CD4-positive, alpha-beta memory T cell (primary cell): ENCODE measurements at regions of chr21 and their contacts with region 1.

Region 1: DNA sequence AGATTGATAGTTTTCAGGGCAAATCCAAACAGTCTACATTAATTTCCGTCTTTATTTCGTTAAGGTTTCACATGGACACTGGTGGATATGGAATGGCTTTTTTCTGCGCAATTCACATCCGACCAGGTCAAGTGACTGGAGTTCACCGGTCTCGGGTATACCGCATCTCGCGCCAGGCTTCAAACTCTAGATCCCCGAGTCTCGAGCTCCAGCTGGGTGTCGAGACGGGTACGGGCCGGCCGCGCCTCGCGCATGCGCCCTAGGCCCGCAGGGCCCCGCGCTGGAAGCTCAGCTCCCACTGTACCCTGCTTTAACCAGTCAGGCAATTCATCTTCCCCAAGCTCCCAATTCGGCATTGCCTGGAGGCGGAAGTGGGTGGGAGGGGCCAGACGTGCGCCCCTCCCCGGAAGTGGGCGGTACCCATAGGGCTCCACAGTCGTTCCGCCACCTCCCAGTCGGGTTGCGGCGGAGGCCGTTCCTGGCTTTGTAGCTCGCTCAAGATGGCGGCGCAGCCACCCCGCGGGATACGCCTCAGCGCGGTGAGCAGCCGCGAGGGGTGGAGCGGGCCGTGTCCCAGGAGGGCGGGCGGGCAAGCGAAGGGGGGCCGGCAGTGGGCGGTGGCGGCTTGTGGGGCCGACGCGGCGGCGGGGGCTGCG is at the start of gene MORC3:
- DNase-seq: peak; percentile 96 to 98 (median 97)
- H3K4me3 ChIP-seq: peak within 1 kb of the TSS; percentile 75 to 98
- H3K4me3 Mint-ChIP-seq: peak within 1 kb of the TSS; percentile 94 to 98 (median 96)
- H3K27ac ChIP-seq: peak within 1 kb of the TSS; percentile 90
- H3K27ac Mint-ChIP-seq: peak within 1 kb of the TSS; percentile 89 to 99 (median 97)
- H3K4me1 ChIP-seq: peaks cover 28% of the 10 kb centered on the region
- H3K4me1 Mint-ChIP-seq: peaks cover 18 to 46% (median 34%) of the 10 kb centered on the region in 4 donors
- H3K27me3 ChIP-seq: no peaks in the 10 kb centered on the region
- H3K27me3 Mint-ChIP-seq: no peaks in the 10 kb centered on the region
- total RNA-seq, gene MORC3: 105 to 108 TPM

Region 2: DNA sequence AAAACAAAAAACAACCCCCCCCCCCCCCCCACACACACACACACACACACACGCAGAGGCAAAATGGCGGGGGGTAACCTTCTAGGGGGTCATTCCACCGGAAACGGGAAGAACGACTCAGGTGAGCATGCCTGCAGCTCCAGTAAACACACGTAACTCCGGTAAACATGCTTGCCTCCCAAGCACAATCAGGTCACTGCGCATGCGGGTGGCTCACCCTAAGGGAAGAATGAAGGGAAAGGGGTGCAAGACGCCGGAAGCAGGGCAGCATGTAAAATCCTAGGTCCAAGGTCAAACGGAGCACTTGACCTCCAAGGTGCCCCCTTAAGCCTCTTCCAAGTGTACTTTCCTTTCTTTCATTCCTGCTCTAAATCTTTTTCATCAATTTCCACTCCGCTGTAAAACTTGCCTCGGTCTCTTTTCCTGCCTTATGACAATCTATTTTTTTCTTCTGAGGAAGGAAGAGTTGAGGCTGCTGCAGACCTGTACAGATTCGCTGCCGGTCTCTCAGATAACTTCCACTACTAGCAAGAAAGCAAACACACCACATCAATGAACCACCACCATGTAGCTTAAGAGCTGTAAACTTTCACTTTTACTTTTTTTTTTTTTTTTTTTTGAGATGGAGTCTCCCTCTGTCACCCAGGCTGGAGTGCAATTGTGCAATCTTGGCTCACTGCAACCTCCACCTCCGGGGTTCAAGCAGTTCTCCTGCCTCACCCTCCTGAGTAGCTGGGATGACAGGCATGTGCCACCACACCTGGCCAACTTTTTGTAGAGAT is 206.1 kb before region 1 on chr21:
- CTCF ChIA-PET with region 1: no interaction called
- POLR2A ChIA-PET with region 1: interaction called, 18 read pairs
- intact Hi-C with region 1: no loop called
- DNase-seq: peak in 4 of 5 donors; percentile 56 to 85 (median 68)
- H3K4me3 ChIP-seq: peak overlapping the region; percentile 63 to 80
- H3K4me3 Mint-ChIP-seq: peak overlapping the region; percentile 81 to 98 (median 92)
- H3K27ac ChIP-seq: peak overlapping the region; percentile 49
- H3K27ac Mint-ChIP-seq: peak overlapping the region; percentile 45 to 97 (median 90)
- H3K4me1 ChIP-seq: peaks cover 29% of the 10 kb centered on the region
- H3K4me1 Mint-ChIP-seq: peaks cover 17 to 33% (median 21%) of the 10 kb centered on the region in 4 donors
- H3K27me3 ChIP-seq: no peaks in the 10 kb centered on the region
- H3K27me3 Mint-ChIP-seq: peaks cover 2% of the 10 kb centered on the region in 2 donors

Region 3: GRCh38 chr21:36141513-36141925 is 178.4 kb before region 1 on chr21:
- CTCF ChIA-PET with region 1: interaction called, 6 read pairs
- POLR2A ChIA-PET with region 1: interaction called, 14 read pairs
- intact Hi-C with region 1: no loop called
- DNase-seq: peak; percentile 87 to 96 (median 89)
- H3K4me3 ChIP-seq: no peak overlapping the region
- H3K4me3 Mint-ChIP-seq: peak overlapping the region in 5 of 8 donors; percentile 7 to 53 (median 12)
- H3K27ac ChIP-seq: peak overlapping the region; percentile 54
- H3K27ac Mint-ChIP-seq: peak overlapping the region; percentile 69 to 95 (median 89)
- H3K4me1 ChIP-seq: peaks cover 40% of the 10 kb centered on the region
- H3K4me1 Mint-ChIP-seq: peaks cover 25 to 50% (median 29%) of the 10 kb centered on the region in 4 donors
- H3K27me3 ChIP-seq: no peaks in the 10 kb centered on the region
- H3K27me3 Mint-ChIP-seq: no peaks in the 10 kb centered on the region

Region 4: GRCh38 chr21:36169436-36170128 is 150.3 kb before region 1 on chr21:
- CTCF ChIA-PET with region 1: interaction called, 8 read pairs
- POLR2A ChIA-PET with region 1: interaction called, 28 read pairs
- intact Hi-C with region 1: no loop called
- DNase-seq: no peak
- H3K4me3 ChIP-seq: no peak overlapping the region
- H3K4me3 Mint-ChIP-seq: no peak overlapping the region
- H3K27ac ChIP-seq: no peak overlapping the region
- H3K27ac Mint-ChIP-seq: peak overlapping the region in 1 of 7 donors; percentile 86
- H3K4me1 ChIP-seq: peaks cover 16% of the 10 kb centered on the region
- H3K4me1 Mint-ChIP-seq: peaks cover 6 to 19% (median 7%) of the 10 kb centered on the region in 4 donors
- H3K27me3 ChIP-seq: no peaks in the 10 kb centered on the region
- H3K27me3 Mint-ChIP-seq: no peaks in the 10 kb centered on the region

Region 5: DNA sequence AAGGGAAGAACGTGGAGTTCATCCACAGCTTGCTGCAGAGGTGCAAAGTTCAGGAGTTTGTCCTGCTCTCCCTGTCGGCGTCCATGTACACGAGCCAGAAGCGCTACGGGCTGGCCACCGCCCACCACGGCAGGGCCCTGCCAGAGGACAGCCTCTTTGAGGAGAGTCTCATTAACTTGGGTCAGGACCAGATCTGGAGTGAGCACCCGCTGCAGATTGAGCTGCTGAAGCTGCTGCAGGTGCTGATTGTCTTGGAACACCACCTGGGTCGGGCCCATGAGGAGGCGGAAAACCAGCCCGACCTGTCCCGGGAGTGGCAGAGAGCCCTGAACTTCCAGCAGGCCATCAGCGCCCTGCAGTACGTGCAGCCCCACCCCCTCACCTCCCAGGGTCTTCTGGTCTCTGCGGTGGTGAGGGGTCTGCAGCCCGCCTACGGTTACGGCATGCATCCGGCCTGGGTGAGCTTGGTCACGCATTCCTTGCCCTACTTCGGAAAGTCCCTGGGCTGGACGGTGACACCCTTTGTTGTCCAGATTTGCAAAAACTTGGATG is 73.7 kb before region 1 on chr21:
- CTCF ChIA-PET with region 1: interaction called, 12 read pairs
- POLR2A ChIA-PET with region 1: interaction called, 4 read pairs
- intact Hi-C with region 1: no loop called
- DNase-seq: no peak
- H3K4me3 ChIP-seq: no peak overlapping the region
- H3K4me3 Mint-ChIP-seq: no peak overlapping the region
- H3K27ac ChIP-seq: no peak overlapping the region
- H3K27ac Mint-ChIP-seq: peak overlapping the region in 1 of 7 donors; percentile 62
- H3K4me1 ChIP-seq: no peaks in the 10 kb centered on the region
- H3K4me1 Mint-ChIP-seq: peaks cover 0 to 4% (median 1%) of the 10 kb centered on the region in 4 donors
- H3K27me3 ChIP-seq: no peaks in the 10 kb centered on the region
- H3K27me3 Mint-ChIP-seq: no peaks in the 10 kb centered on the region

Region 6: GRCh38 chr21:36288651-36289243 is 31.1 kb before region 1 on chr21:
- CTCF ChIA-PET with region 1: interaction called, 56 read pairs
- POLR2A ChIA-PET with region 1: interaction called, 203 read pairs
- intact Hi-C with region 1: loop called (anchors 1 kb)
- DNase-seq: peak in 4 of 5 donors; percentile 59 to 72 (median 62)
- H3K4me3 ChIP-seq: peak overlapping the region in 1 of 2 donors; percentile 11
- H3K4me3 Mint-ChIP-seq: peak overlapping the region; percentile 65 to 89 (median 80)
- H3K27ac ChIP-seq: peak overlapping the region; percentile 77
- H3K27ac Mint-ChIP-seq: peak overlapping the region; percentile 95 to 99 (median 96)
- H3K4me1 ChIP-seq: peaks cover 26% of the 10 kb centered on the region
- H3K4me1 Mint-ChIP-seq: peaks cover 18 to 29% (median 24%) of the 10 kb centered on the region in 4 donors
- H3K27me3 ChIP-seq: no peaks in the 10 kb centered on the region
- H3K27me3 Mint-ChIP-seq: peaks cover 0 to 1% of the 10 kb centered on the region in 2 donors

Region 7: DNA sequence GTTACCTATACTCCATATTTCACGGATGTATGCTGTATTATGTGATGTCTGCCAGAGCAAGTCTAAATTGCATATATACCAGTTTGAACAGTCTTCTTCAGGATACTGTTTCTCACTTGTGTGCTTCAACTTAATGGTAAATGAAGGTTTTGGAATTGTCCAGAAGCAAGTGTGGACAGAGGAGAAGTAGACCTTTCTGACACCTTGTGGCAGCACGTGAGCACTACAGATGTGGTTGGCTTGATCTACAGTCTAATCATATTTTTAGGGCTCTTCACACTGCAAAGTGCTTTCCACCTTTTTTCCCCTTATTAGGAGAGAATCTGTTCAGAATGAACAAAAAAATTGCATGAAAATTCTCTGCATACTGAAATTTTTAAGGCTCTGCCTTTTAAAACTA is 11.0 kb after region 1 on chr21:
- CTCF ChIA-PET with region 1: interaction called, 54 read pairs
- POLR2A ChIA-PET with region 1: interaction called, 22 read pairs
- intact Hi-C with region 1: loop called (anchors 1 kb)
- DNase-seq: peak; percentile 43 to 61 (median 53)
- H3K4me3 ChIP-seq: no peak overlapping the region
- H3K4me3 Mint-ChIP-seq: peak overlapping the region in 2 of 8 donors; percentile 0 to 61
- H3K27ac ChIP-seq: no peak overlapping the region
- H3K27ac Mint-ChIP-seq: peak overlapping the region in 6 of 7 donors; percentile 58 to 75 (median 70)
- H3K4me1 ChIP-seq: peaks cover 53% of the 10 kb centered on the region
- H3K4me1 Mint-ChIP-seq: peaks cover 38 to 58% (median 47%) of the 10 kb centered on the region in 4 donors
- H3K27me3 ChIP-seq: no peaks in the 10 kb centered on the region
- H3K27me3 Mint-ChIP-seq: no peaks in the 10 kb centered on the region